Mammary epithelial cell (primary cell): ENCODE measurements at regions of chr20 and their contacts with region 1.

Region 1: GRCh38 chr20:22586645-22587310 is 2.4 kb upstream of the FOXA2 start:
- DNase-seq: no peak
- H3K4me3 ChIP-seq: no peak overlapping the region
- H3K27ac ChIP-seq: no peak overlapping the region
- H3K4me1 ChIP-seq: peaks cover 23% of the 10 kb centered on the region
- H3K27me3 ChIP-seq: peaks cover 48% of the 10 kb centered on the region
- CTCF ChIP-seq: peak; percentile 14 to 77

Region 2: GRCh38 chr20:22333885-22334545 is 252.8 kb before region 1 on chr20:
- CTCF ChIA-PET with region 1: interaction called, 11 read pairs
- dilution Hi-C with region 1: no loop called
- in situ Hi-C with region 1: loop called (anchors 5 to 10 kb)
- intact Hi-C with region 1: loop called (anchors 1 kb)
- DNase-seq: peak; percentile 40
- H3K4me3 ChIP-seq: no peak overlapping the region
- H3K27ac ChIP-seq: no peak overlapping the region
- H3K4me1 ChIP-seq: no peaks in the 10 kb centered on the region
- H3K27me3 ChIP-seq: no peaks in the 10 kb centered on the region
- CTCF ChIP-seq: peak; percentile 80 to 89

Region 3: GRCh38 chr20:22346716-22347115 is 240.1 kb before region 1 on chr20:
- CTCF ChIA-PET with region 1: no interaction called
- dilution Hi-C with region 1: loop called (anchors 5 kb)
- in situ Hi-C with region 1: no loop called
- intact Hi-C with region 1: no loop called
- DNase-seq: peak; percentile 17
- H3K4me3 ChIP-seq: no peak overlapping the region
- H3K27ac ChIP-seq: no peak overlapping the region
- H3K4me1 ChIP-seq: peaks cover 6% of the 10 kb centered on the region
- H3K27me3 ChIP-seq: no peaks in the 10 kb centered on the region
- CTCF ChIP-seq: no peak

Region 4: GRCh38 chr20:22453239-22454080 is 133.3 kb before region 1 on chr20:
- CTCF ChIA-PET with region 1: interaction called, 5 read pairs
- dilution Hi-C with region 1: no loop called
- in situ Hi-C with region 1: no loop called
- intact Hi-C with region 1: loop called (anchors 5 kb)
- DNase-seq: peak; percentile 43
- H3K4me3 ChIP-seq: no peak overlapping the region
- H3K27ac ChIP-seq: no peak overlapping the region
- H3K4me1 ChIP-seq: no peaks in the 10 kb centered on the region
- H3K27me3 ChIP-seq: no peaks in the 10 kb centered on the region
- CTCF ChIP-seq: peak; percentile 78 to 84

Region 5: GRCh38 chr20:22684072-22684762 is 97.4 kb after region 1 on chr20:
- CTCF ChIA-PET with region 1: no interaction called
- dilution Hi-C with region 1: no loop called
- in situ Hi-C with region 1: no loop called
- intact Hi-C with region 1: loop called (anchors 2 kb)
- DNase-seq: peak; percentile 54
- H3K4me3 ChIP-seq: no peak overlapping the region
- H3K27ac ChIP-seq: no peak overlapping the region
- H3K4me1 ChIP-seq: no peaks in the 10 kb centered on the region
- H3K27me3 ChIP-seq: no peaks in the 10 kb centered on the region
- CTCF ChIP-seq: peak; percentile 79 to 91